Activated T-helper 2 cell treated with anti-CD3 and anti-CD28 coated beads, Interferon-gamma antibody, Interleukin-2, Interleukin-4, amounts not matched to agents 10 μg/mL and 5 μg/mL and 100 μg/mL, durations not matched to agents 14 hours and 24 hours and 36 hours (primary cell): ENCODE measurements at regions of chr5 and their contacts with region 1.

Region 1: DNA sequence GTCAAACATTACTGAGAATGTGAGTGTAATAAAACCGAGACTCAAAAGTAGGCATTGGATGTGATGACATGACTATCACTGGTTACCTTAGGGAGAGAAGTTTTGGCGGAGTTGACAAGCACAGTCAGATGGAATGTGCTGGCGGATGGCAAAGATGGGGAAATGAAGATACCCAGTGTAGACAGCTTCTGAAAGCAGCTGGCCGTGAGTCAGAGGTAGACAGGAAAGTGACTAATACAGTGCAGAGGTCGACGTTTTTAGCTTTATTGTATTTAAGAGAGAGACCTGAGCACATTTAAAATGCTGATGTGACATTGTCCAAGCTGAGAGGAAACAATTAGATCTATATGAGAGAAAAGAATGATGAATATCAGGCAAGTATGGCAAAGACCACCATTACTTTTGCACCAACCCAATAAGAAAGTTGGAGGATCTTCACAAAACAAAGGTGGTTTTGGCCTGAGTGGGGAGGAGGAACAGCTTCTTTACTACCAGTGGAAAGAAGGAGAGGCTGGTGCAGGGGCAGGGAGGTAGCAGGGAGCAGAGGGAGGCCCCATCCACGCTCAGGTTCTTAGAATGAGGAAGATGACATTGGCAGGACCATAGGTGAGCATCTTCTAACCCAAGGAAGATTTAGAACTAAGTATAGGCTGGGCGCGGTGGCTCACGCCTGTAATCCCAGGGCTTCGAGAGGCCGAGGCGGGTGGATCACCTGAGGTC is 36.7 kb upstream of the KCNIP1 start:
- DNase-seq: no peak
- H3K4me3 Mint-ChIP-seq: no peak overlapping the region
- H3K27ac Mint-ChIP-seq: no peak overlapping the region
- H3K4me1 Mint-ChIP-seq: no peaks in the 10 kb centered on the region
- H3K27me3 Mint-ChIP-seq: peaks cover 12% of the 10 kb centered on the region

Region 2: GRCh38 chr5:170534177-170534576 is 67.0 kb after region 1 on chr5:
- intact Hi-C with region 1: no loop called
- DNase-seq: no peak
- H3K4me3 Mint-ChIP-seq: no peak overlapping the region
- H3K27ac Mint-ChIP-seq: no peak overlapping the region
- H3K4me1 Mint-ChIP-seq: no peaks in the 10 kb centered on the region
- H3K27me3 Mint-ChIP-seq: peaks cover 2% of the 10 kb centered on the region

Region 3: DNA sequence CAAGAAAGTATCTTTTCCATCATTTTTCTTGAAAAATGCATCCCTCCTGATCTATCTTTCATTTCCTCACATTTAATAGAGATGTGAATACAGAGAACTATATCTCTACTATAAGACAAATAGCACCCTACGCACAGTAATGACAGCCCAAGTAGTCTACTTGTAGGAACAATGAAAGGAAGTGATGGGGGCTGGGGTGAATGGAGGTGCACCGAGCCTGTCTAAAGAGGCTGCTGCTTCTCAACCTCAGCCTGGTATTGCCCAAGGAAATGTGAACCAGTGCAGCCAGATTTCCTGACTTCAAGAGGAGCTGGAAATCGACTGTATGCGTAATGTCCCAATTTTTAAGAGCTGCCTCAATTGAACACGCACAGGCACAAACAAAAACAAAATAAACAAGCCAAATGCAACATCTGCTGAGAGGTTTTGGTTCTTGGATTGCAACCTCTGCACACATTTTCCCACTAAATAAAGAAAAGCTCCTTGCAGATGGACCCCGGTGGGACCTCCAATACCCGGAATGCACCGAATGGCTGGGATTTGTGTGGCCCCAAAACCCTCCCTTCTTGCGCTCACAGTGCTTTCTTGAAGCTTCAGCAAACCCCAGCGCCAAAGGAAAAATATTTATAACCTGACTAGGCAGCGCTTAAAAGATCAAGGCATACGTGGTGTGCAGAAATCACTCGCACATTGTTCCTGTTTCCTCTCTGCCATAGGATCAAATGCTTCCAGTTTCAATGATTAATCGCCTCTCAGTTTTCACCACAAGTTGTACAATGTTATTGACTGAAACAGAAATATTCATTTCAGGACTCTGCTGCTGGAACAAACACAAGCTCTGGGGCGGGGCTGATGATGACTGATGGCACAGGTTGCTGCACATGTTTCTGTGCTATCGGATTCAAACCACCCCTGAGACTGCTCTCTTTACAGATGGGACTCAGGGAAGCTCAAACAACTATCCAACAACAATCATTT is 105.0 kb after region 1 on chr5:
- intact Hi-C with region 1: loop called (anchors 1 kb)
- DNase-seq: peak; percentile 20
- H3K4me3 Mint-ChIP-seq: no peak overlapping the region
- H3K27ac Mint-ChIP-seq: no peak overlapping the region
- H3K4me1 Mint-ChIP-seq: peaks cover 14% of the 10 kb centered on the region
- H3K27me3 Mint-ChIP-seq: peaks cover 45% of the 10 kb centered on the region

Region 4: GRCh38 chr5:170597109-170597751 is 130.1 kb after region 1 on chr5:
- intact Hi-C with region 1: loop called (anchors 1 kb)
- DNase-seq: no peak
- H3K4me3 Mint-ChIP-seq: no peak overlapping the region
- H3K27ac Mint-ChIP-seq: no peak overlapping the region
- H3K4me1 Mint-ChIP-seq: peaks cover 17% of the 10 kb centered on the region
- H3K27me3 Mint-ChIP-seq: peaks cover 25% of the 10 kb centered on the region